ENCODE measurements at regions of chr10 and their contacts with region 1.

Region 1: DNA sequence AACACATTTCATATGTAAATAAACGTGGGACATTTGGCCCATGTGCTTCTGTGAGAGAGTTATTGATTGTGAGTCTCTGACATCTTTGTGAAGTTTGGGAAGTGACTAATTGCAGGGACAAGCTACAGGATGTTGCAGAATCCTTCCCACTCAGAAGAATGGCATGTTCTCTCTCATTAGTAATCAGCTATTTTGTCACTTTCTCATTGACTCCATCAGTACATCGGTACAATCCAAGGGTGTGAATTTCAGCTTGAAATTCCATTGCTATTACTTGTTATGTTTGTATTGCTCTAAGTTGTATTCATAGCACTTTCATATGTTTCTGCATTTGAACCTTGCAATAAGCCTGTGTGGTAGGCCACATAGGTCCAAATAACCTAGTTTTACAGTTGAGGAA is 100.0 kb upstream of the KCNMA1 start:
- DNase-seq: peak; percentile 99
- ATAC-seq: peak; percentile 91
- H3K4me3 ChIP-seq: no peak overlapping the region
- H3K27ac ChIP-seq: peak overlapping the region; percentile 34
- H3K4me1 ChIP-seq: peaks cover 13% of the 10 kb centered on the region
- H3K27me3 ChIP-seq: no peaks in the 10 kb centered on the region
- CTCF ChIP-seq: no peak

Region 2: DNA sequence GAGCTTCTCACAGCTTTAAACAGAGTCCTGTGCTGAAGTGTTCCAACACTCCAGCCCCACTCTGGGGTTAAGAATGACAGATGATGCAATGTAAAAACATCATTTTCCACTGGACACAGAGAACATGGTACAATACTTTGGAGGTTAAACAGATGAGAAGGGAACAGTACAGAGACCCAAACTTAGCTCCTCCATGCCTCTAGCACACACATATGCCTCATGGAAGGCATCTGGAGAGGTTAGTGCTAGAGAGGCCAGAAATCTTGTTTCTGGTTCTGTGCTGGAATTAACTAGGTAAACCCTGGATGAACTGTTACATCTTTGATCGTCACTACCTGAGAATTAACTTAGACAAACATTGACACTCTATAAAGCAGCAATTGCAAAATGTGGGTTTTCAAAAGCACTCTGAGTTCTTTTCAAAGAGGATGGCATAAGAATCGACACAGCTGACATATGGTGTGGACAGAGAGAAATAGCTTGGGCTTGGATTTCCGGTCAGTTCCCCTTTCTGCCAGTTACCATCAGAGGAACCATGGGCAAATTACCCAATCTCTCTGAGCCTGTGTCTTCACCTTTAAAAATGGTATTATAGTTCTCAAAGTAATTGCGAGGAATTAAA is 181.9 kb before region 1 on chr10:
- CTCF ChIA-PET with region 1: no interaction called
- POLR2A ChIA-PET with region 1: no interaction called
- intact Hi-C with region 1: no loop called
- DNase-seq: no peak
- ATAC-seq: no peak
- H3K4me3 ChIP-seq: no peak overlapping the region
- H3K27ac ChIP-seq: no peak overlapping the region
- H3K4me1 ChIP-seq: peaks cover 10% of the 10 kb centered on the region; the same call in 1 of the 2 replicates
- H3K27me3 ChIP-seq: no peaks in the 10 kb centered on the region
- CTCF ChIP-seq: no peak

Region 3: DNA sequence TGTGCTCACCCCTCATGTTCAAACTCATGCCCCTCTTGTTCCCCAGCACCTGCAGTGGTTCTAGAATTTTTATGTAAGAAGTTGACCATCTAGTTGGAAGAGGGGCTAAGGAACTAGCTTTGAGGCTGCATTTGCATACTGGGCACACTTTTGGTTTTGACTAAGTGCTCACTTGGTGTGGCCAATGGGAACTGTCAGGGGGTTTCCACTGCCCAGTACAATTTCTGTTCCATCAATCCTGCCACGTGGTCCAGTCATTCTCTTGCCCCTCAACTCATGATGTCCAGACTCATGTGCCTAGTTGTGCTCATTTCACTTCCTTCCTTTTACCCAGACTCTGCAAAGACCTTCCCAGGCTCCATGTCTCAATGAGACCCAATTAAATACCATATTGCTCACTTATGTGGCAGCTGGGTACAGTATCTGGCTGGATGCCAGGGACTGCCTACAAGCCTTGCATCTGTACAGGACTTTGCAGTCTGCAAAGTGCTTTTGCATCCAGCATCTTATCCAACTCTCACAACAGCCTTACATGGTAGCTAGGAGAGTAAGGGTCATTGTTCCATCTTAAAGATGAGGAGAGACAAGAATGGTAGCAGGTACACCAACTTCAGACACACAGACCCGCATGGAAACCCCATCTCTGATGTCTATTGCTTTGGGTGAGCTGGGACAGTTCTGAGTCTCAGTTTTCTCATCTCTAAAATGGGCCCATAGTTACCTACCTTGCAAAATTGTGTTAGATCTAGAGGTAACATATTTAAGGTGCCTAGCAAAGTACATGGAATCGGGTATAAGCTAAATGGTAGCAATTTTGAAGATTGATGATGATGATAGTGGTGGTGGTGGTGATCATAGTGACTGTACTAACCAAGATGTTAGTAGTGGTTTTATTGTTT is 69.9 kb before region 1 on chr10:
- CTCF ChIA-PET with region 1: no interaction called
- POLR2A ChIA-PET with region 1: interaction called, 10 read pairs
- intact Hi-C with region 1: no loop called
- DNase-seq: no peak
- ATAC-seq: no peak
- H3K4me3 ChIP-seq: no peak overlapping the region
- H3K27ac ChIP-seq: no peak overlapping the region
- H3K4me1 ChIP-seq: no peaks in the 10 kb centered on the region
- H3K27me3 ChIP-seq: peaks cover 16% of the 10 kb centered on the region; the same call in 1 of the 2 replicates
- CTCF ChIP-seq: no peak

Region 4: GRCh38 chr10:77721815-77722214 is 15.8 kb before region 1 on chr10:
- CTCF ChIA-PET with region 1: no interaction called
- POLR2A ChIA-PET with region 1: no interaction called
- intact Hi-C with region 1: loop called (anchors 2 kb)
- DNase-seq: no peak
- ATAC-seq: no peak
- H3K4me3 ChIP-seq: no peak overlapping the region
- H3K27ac ChIP-seq: no peak overlapping the region
- H3K4me1 ChIP-seq: peaks cover 4% of the 10 kb centered on the region; the same call in 1 of the 2 replicates
- H3K27me3 ChIP-seq: no peaks in the 10 kb centered on the region
- CTCF ChIP-seq: no peak